Activated CD4-positive, alpha-beta memory T cell treated with anti-CD3 and anti-CD28 coated beads, Interleukin-2, amount 10 ng/mL, durations not matched to agents 7 days and 5 days (primary cell): ENCODE measurements at regions of chr17 and their contacts with region 1.

Region 1: GRCh38 chr17:17641621-17642409 is 39.4 kb upstream of the RAI1 start:
- DNase-seq: peak; percentile 83
- H3K4me3 Mint-ChIP-seq: no peak overlapping the region
- H3K27ac Mint-ChIP-seq: no peak overlapping the region
- H3K4me1 Mint-ChIP-seq: no peaks in the 10 kb centered on the region
- H3K27me3 Mint-ChIP-seq: peaks cover 4% of the 10 kb centered on the region

Region 2: DNA sequence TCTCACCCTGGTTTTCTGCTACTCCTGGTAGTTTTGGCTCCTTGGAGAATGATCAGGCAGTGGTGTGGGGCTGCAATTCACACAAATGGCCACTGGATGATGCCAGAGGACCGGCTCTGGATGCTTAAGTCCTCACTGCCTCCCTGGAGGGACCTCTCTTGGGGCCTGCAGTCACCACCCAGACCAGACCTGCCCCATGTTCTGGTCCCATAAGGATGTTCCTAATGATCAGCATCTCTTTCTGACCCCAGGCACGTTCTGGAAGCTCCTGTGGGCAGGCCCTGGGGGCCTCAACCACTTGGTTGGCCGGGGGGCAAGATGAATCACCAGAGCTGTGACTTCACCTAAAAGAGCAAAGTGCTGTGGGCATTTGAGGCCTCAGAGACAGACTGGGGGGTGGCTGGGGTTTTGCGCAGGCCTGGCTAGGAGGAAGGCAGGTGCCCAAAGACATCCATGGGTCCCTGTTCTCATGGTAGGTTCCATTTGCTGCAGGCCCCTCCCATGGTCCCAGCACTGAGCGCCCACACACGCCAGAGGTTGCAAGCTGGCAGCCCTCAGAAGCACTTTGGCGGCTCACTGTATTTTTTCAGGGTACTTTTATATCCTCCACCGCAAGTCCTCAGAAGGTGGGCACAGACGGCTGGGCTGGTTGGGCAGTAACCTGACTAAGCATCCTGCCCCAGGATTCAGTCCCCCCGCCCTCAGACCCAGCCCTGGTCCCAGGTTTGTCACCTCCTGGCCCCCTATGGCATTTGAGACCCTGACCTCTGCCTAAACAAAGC is 285.5 kb before region 1 on chr17:
- CTCF ChIA-PET with region 1: interaction called, 23 read pairs
- POLR2A ChIA-PET with region 1: no interaction called
- DNase-seq: peak; percentile 77
- H3K4me3 Mint-ChIP-seq: no peak overlapping the region
- H3K27ac Mint-ChIP-seq: no peak overlapping the region
- H3K4me1 Mint-ChIP-seq: no peaks in the 10 kb centered on the region
- H3K27me3 Mint-ChIP-seq: peaks cover 22% of the 10 kb centered on the region

Region 3: DNA sequence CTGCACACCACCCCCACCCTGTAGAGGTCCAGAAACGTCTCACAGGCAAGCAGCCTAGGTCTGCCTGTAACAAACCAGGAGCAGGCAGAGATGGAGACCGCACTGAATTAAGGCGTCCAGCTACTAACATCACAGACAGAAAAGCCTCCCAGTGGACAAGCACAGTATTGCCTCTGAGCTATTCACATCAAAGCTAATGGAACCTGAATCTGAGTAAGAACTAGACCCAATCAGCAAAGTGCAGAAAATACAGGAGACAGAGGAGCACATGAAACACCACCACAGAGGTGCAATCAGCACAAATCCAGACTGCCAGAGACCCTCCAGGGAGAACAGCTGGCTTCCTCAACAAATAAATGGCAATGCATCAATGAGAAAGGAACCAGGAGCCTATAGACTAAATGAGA is 28.1 kb before region 1 on chr17:
- CTCF ChIA-PET with region 1: interaction called, 16 read pairs
- POLR2A ChIA-PET with region 1: no interaction called
- DNase-seq: peak; percentile 45
- H3K4me3 Mint-ChIP-seq: no peak overlapping the region
- H3K27ac Mint-ChIP-seq: no peak overlapping the region
- H3K4me1 Mint-ChIP-seq: no peaks in the 10 kb centered on the region
- H3K27me3 Mint-ChIP-seq: no peaks in the 10 kb centered on the region